A673 (cell line): ENCODE measurements at regions of chr4 and their contacts with region 1.

Region 1: GRCh38 chr4:128863312-128864075 is 54.0 kb downstream of the JADE1 start:
- DNase-seq: peak; percentile 75
- H3K4me3 ChIP-seq: no peak overlapping the region
- H3K27ac ChIP-seq: no peak overlapping the region
- H3K4me1 ChIP-seq: no peaks in the 10 kb centered on the region
- H3K27me3 ChIP-seq: no peaks in the 10 kb centered on the region
- CTCF ChIP-seq: peak; percentile 90

Region 2: DNA sequence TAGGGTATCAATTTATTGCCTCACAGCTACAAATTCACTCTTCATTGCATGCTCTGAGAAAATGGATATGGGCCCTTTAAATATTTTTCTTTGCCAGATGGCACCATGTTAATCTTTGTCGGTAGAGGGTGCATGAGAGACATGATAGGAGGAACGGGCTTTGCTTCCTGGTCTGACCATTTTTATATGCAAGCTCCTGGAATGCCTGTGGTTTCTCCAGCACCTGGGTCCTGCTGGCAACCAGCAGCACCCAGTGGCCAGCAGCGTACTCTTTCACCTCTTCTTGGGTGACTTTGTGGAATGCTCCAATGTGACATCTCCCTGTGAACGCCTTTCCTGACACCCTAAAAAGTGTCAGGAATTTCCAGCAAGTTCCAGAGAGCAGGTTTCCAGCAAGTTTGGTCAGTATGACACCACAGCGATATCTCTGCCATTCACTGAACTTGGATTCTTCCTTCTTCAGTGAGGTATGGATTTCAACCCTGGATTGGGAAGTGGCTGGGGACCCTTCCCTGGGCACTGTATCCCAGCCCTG is 435.6 kb before region 1 on chr4:
- CTCF ChIA-PET with region 1: no interaction called
- POLR2A ChIA-PET with region 1: no interaction called
- intact Hi-C with region 1: loop called (anchors 10 kb)
- DNase-seq: peak; percentile 64
- H3K4me3 ChIP-seq: no peak overlapping the region
- H3K27ac ChIP-seq: no peak overlapping the region
- H3K4me1 ChIP-seq: no peaks in the 10 kb centered on the region
- H3K27me3 ChIP-seq: no peaks in the 10 kb centered on the region
- CTCF ChIP-seq: peak; percentile 59

Region 3: DNA sequence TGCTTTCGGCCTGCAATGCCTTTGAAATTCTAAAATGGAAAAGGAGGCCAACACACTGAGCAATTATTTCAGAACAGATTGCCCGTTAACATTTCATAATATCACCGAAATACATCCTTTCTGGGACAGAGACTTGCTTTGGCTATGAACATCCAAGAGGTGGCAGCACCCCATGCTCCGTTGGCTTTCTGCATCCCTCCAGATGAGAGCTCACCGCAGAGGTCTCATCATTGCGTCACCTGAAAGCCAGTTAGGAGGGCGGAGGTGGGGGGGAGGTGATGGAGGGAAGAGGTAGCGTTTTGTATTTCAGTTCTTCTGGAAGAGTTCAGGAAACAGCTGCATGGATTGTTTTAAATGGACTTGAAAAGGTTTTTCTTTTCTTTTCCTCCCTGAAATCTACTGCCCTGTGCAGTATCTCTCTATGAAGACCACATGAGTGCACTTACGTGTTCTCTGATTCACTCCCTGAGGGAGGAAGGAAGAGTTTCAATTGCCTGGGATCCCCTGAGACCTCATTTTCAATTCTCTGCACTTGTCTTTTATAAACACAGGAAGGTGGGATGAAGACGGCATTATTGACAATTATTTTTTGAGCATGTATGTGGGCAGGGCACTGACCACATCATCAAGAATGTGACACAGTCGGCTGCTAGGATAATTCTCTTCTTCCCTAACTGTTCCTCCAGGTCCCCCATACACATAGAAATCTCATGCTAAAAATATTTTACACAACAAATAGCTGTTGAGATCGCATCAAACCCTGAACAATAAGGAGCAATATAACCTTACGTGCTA is 409.0 kb before region 1 on chr4:
- CTCF ChIA-PET with region 1: no interaction called
- POLR2A ChIA-PET with region 1: no interaction called
- intact Hi-C with region 1: loop called (anchors 2 kb)
- DNase-seq: peak; percentile 88
- H3K4me3 ChIP-seq: no peak overlapping the region
- H3K27ac ChIP-seq: no peak overlapping the region
- H3K4me1 ChIP-seq: no peaks in the 10 kb centered on the region
- H3K27me3 ChIP-seq: no peaks in the 10 kb centered on the region
- CTCF ChIP-seq: peak; percentile 84

Region 4: GRCh38 chr4:128565565-128566186 is 297.8 kb before region 1 on chr4:
- CTCF ChIA-PET with region 1: no interaction called
- POLR2A ChIA-PET with region 1: no interaction called
- intact Hi-C with region 1: loop called (anchors 1 kb)
- DNase-seq: peak; percentile 51
- H3K4me3 ChIP-seq: no peak overlapping the region
- H3K27ac ChIP-seq: no peak overlapping the region
- H3K4me1 ChIP-seq: no peaks in the 10 kb centered on the region
- H3K27me3 ChIP-seq: no peaks in the 10 kb centered on the region
- CTCF ChIP-seq: peak; percentile 58

Region 5: GRCh38 chr4:128979934-128980333 is 116.4 kb after region 1 on chr4:
- CTCF ChIA-PET with region 1: no interaction called
- POLR2A ChIA-PET with region 1: no interaction called
- intact Hi-C with region 1: no loop called
- DNase-seq: peak; percentile 19
- H3K4me3 ChIP-seq: no peak overlapping the region
- H3K27ac ChIP-seq: no peak overlapping the region
- H3K4me1 ChIP-seq: peaks cover 6% of the 10 kb centered on the region
- H3K27me3 ChIP-seq: no peaks in the 10 kb centered on the region
- CTCF ChIP-seq: no peak

Region 6: GRCh38 chr4:129093191-129093920 is 229.9 kb after region 1 on chr4 and contains the start of gene SCLT1:
- CTCF ChIA-PET with region 1: no interaction called
- POLR2A ChIA-PET with region 1: no interaction called
- intact Hi-C with region 1: loop called (anchors 10 kb)
- DNase-seq: peak; percentile 98
- H3K4me3 ChIP-seq: peak within 1 kb of the TSS; percentile 73
- H3K27ac ChIP-seq: peak within 1 kb of the TSS; percentile 84
- H3K4me1 ChIP-seq: peaks cover 13% of the 10 kb centered on the region
- H3K27me3 ChIP-seq: no peaks in the 10 kb centered on the region
- CTCF ChIP-seq: no peak
- total RNA-seq, gene SCLT1: 24.1 and 26.7 TPM in 2 replicates